ENCODE measurements at regions of chr4 and their contacts with region 1.

Region 1: DNA sequence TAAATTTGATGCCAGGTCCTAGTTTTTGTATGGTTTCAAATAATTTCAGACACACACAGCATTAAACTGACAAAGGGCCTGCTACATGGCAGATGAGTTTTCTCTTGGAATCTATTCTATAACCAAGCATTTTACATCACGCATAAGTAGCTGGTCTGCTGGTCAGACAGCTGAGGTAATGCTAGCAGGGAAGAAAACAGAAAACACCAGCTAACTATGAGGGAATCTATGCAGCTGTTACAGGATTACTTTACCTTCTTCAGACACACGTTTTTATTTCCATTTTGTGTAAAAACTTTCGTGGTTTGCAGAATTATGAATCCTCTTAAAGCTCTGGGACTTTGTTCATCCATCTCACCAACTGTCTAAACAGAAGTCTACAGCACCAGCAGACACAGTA is 42.0 kb downstream of the MFAP3L start:
- DNase-seq: no peak
- H3K4me3 ChIP-seq: no peak overlapping the region
- H3K27ac ChIP-seq: no peak overlapping the region
- H3K4me1 ChIP-seq: no peaks in the 10 kb centered on the region
- H3K27me3 ChIP-seq: no peaks in the 10 kb centered on the region

Region 2: GRCh38 chr4:169971456-169972015 is 12.6 kb before region 1 on chr4:
- CTCF ChIA-PET with region 1: no interaction called
- POLR2A ChIA-PET with region 1: no interaction called
- DNase-seq: no peak
- H3K4me3 ChIP-seq: no peak overlapping the region
- H3K27ac ChIP-seq: no peak overlapping the region
- H3K4me1 ChIP-seq: no peaks in the 10 kb centered on the region
- H3K27me3 ChIP-seq: no peaks in the 10 kb centered on the region

Region 3: DNA sequence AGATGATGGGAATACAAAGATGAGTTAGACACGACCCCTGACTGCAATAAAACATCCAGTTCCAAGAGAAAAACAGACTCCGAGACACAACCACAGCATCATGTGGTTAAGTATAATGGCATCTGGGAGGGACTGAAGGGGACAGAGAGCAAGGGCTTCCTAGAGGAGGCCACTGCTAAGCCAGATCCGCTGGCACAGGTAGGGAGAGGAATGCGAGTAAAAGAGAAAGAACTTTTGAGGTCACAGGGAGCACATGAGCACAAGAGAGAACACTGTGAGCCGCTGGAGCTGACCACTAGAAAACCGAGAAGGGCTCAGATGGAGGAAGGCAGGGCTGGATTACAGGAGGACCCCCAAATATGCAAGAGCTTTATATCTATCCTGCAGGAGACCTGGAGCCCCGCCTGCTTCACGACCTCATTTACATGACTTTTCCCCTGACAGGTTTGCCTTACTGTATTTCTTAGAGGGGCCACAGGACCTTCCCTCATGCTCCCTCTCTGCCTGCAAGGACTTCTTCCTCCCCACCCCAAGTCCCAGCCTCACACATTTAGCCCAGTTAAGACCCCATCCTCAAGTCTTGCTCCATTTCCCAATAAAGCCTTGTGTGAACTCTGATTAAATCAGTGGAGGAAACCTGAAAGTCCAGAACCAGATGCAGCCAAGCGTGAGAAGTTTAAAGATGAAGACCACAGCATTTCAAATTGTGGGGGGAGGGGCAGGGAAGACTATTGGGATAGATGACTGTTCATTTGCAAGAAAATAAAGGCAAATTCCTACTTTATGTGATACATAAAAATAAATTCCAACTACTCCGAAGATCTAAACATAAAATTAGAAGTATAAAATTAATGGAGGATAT is 12.4 kb after region 1 on chr4:
- CTCF ChIA-PET with region 1: interaction called, 10 read pairs
- POLR2A ChIA-PET with region 1: no interaction called
- DNase-seq: no peak
- H3K4me3 ChIP-seq: no peak overlapping the region
- H3K27ac ChIP-seq: no peak overlapping the region
- H3K4me1 ChIP-seq: peaks cover under 1 to 4% (median 3%) of the 10 kb centered on the region in 4 experiments
- H3K27me3 ChIP-seq: no peaks in the 10 kb centered on the region